Pancreas (tissue), 10 donors: ENCODE measurements at regions of chr10 and their contacts with region 1.

Region 1: GRCh38 chr10:110206995-110207804 is at the start of gene MXI1:
- DNase-seq: peak; percentile 60 to 85 (median 76)
- ATAC-seq: peak in 3 of 4 donors; percentile 22 to 45 (median 35)
- H3K4me3 ChIP-seq: peak within 1 kb of the TSS; percentile 38 to 78 (median 66)
- H3K27ac ChIP-seq: peak within 1 kb of the TSS; percentile 64 to 97 (median 93)
- H3K4me1 ChIP-seq: peaks cover 6 to 7% (median 7%) of the 10 kb centered on the region in 3 donors
- H3K27me3 ChIP-seq: no peaks in the 10 kb centered on the region
- CTCF ChIP-seq: no peak
- total RNA-seq, gene MXI1: 17.8 to 30.5 (median 22.6) TPM

Region 2: DNA sequence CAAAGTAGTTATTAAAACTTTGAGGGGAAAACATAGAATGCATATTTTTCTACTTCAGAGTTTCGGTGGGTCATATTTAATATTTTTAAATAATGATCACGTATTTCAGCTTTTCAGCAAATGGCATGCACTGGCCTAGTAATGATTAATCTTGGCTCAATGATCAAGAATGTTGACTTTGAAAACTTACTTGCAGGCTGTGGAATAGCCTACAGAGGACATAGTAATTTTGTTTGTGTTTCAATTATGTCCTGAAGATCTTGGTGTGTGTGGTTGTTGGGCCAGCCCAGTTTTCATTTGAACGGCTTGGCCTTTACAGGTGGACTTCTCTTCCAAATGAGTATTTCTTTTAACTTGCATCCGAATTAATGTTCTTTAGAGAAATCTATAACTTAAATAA is 164.3 kb before region 1 on chr10:
- intact Hi-C with region 1: no loop called
- DNase-seq: no peak
- ATAC-seq: peak; percentile 59 to 77 (median 64)
- H3K4me3 ChIP-seq: no peak overlapping the region
- H3K27ac ChIP-seq: peak overlapping the region in 1 of 4 donors; percentile 29
- H3K4me1 ChIP-seq: peaks cover 38 to 48% (median 38%) of the 10 kb centered on the region in 3 donors
- H3K27me3 ChIP-seq: no peaks in the 10 kb centered on the region
- CTCF ChIP-seq: no peak

Region 3: DNA sequence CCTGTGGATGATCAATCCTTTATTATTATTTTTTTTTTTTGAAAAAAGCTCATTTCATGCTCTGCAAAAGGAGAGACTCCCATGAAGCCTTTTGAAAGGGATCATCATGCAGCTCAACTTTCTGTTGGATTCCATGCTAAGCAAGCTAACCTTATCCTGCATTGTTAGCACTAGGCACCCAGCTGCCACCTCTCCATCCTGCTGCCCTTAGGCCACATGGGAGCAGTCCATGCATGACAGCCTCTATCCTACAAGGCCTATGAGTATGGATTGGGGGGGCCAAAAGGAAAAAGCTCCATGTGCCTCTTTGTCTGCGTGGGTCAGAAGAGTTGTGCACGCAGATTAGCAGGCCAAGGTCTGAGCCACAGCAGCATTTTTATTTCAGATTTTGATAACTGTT is 78.3 kb after region 1 on chr10:
- intact Hi-C with region 1: loop called in 1 of 3 experiments (anchors 10 kb)
- DNase-seq: no peak
- ATAC-seq: no peak
- H3K4me3 ChIP-seq: no peak overlapping the region
- H3K27ac ChIP-seq: no peak overlapping the region
- H3K4me1 ChIP-seq: no peaks in the 10 kb centered on the region
- H3K27me3 ChIP-seq: no peaks in the 10 kb centered on the region
- CTCF ChIP-seq: no peak